Transverse colon (tissue), 4 donors: ENCODE measurements at regions of chr11 and their contacts with region 1.

Region 1: DNA sequence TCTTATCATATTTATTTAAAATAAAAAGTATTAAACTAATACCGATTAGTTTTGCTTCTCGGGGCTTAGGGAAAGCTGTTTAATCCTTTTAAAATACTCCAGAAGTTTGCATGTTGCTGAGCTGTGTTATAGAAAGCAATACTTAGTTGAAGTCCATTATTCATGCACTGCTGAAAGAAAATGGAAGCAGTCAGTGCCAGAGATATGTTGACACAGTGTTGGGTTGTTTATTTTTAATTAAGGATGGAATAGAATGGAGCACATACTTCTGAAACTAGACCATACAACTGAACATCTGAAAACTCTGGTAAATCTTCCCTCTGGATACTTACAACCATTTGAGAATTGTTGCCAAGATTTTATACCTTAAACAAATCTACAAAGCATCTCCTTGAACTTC is 282.7 kb upstream of the CCDC179 start:
- DNase-seq: no peak
- H3K4me3 ChIP-seq: no peak overlapping the region
- H3K27ac ChIP-seq: no peak overlapping the region
- H3K4me1 ChIP-seq: no peaks in the 10 kb centered on the region
- H3K27me3 ChIP-seq: no peaks in the 10 kb centered on the region
- CTCF ChIP-seq: no peak
- EP300 ChIP-seq: no peak
- POLR2A ChIP-seq: no peak

Region 2: GRCh38 chr11:23090659-23091058 is 52.4 kb before region 1 on chr11:
- in situ Hi-C with region 1: no loop called
- intact Hi-C with region 1: loop called (anchors 2 kb)
- DNase-seq: no peak
- H3K4me3 ChIP-seq: no peak overlapping the region
- H3K27ac ChIP-seq: no peak overlapping the region
- H3K4me1 ChIP-seq: no peaks in the 10 kb centered on the region
- H3K27me3 ChIP-seq: no peaks in the 10 kb centered on the region
- CTCF ChIP-seq: no peak
- EP300 ChIP-seq: no peak
- POLR2A ChIP-seq: no peak

Region 3: GRCh38 chr11:23155503-23155902 is 12.5 kb after region 1 on chr11:
- in situ Hi-C with region 1: no loop called
- intact Hi-C with region 1: loop called (anchors 1 kb)
- DNase-seq: no peak
- H3K4me3 ChIP-seq: no peak overlapping the region
- H3K27ac ChIP-seq: no peak overlapping the region
- H3K4me1 ChIP-seq: no peaks in the 10 kb centered on the region
- H3K27me3 ChIP-seq: no peaks in the 10 kb centered on the region
- CTCF ChIP-seq: no peak
- EP300 ChIP-seq: no peak
- POLR2A ChIP-seq: no peak